ENCODE measurements at regions of chr10 and their contacts with region 1.

Region 1: GRCh38 chr10:35140727-35141126 is 14.1 kb downstream of the CREM start:
- DNase-seq: no peak
- ATAC-seq: peak; percentile 60 to 90 (median 76)
- H3K4me3 ChIP-seq: no peak overlapping the region
- H3K27ac ChIP-seq: peak overlapping the region in 3 of 4 donors; percentile 4 to 33 (median 27)
- H3K4me1 ChIP-seq: peaks cover 0 to 8% (median 0%) of the 10 kb centered on the region in 3 donors
- H3K27me3 ChIP-seq: no peaks in the 10 kb centered on the region
- CTCF ChIP-seq: no peak

Region 2: DNA sequence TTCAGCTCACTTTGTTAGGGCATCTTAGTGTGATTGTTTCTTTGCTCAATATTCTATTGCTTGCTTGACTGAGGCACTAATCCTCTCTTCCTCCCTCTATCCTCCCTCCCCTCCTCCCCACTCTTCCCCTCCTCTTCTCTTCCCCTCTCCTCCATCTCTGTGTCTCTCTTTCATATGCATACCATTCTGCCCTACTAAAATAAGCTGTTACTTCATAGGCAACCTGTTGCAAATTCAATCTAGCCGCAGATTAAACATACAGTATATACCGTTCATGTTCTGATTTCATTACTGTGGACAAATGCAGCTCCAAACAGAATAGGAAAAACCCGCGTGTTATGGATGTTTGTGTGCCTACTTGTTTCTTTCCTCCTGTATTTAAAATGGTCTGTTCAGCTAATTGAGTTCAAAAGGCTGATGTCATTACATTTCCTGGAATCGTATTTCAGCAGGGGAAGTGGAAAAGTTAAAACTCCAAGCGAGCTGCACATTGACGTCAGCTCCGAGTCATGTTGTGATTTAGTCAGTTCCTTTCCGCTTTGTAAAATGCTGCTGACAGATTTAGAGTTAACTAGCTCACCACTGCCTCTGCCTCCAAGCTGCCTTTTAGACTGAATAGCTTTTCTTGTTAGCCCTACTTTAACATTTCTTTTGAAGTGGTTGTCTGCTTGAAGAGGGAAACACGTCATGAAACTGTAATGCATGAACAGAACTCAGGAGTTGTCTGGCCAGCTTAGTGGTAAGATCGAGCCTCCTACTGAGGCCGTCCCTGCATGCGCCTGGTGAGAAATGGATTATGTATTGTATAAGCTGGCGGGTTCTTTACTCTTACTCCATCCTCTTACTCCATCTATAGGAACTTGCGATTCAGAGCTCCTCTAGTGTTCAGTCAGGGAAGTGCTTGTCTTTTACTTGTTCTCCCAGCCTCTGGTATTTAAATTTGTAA is 54.9 kb after region 1 on chr10:
- intact Hi-C with region 1: loop called in 1 of 3 experiments (anchors 10 kb)
- DNase-seq: peak in 3 of 6 donors; percentile 62 to 80 (median 63)
- ATAC-seq: peak; percentile 91 to 96 (median 94)
- H3K4me3 ChIP-seq: peak overlapping the region in 2 of 4 donors; percentile 35 to 51
- H3K27ac ChIP-seq: peak overlapping the region; percentile 78 to 97 (median 86)
- H3K4me1 ChIP-seq: peaks cover 0 to 11% (median 0%) of the 10 kb centered on the region in 3 donors
- H3K27me3 ChIP-seq: no peaks in the 10 kb centered on the region
- CTCF ChIP-seq: peak; percentile 71 to 86 (median 82)

Region 3: GRCh38 chr10:35218339-35218955 is 77.7 kb after region 1 on chr10:
- intact Hi-C with region 1: no loop called
- DNase-seq: peak in 5 of 6 donors; percentile 47 to 83 (median 75)
- ATAC-seq: peak; percentile 77 to 93 (median 88)
- H3K4me3 ChIP-seq: no peak overlapping the region
- H3K27ac ChIP-seq: no peak overlapping the region
- H3K4me1 ChIP-seq: no peaks in the 10 kb centered on the region
- H3K27me3 ChIP-seq: no peaks in the 10 kb centered on the region
- CTCF ChIP-seq: peak; percentile 49 to 88 (median 75)